AG04450 (cell line): ENCODE measurements at regions of chr3 and their contacts with region 1.

Region 1: GRCh38 chr3:48446425-48447193 is at the start of gene ATRIP:
- DNase-seq: no peak
- H3K4me3 ChIP-seq: peak within 1 kb of the TSS; percentile 95
- H3K27ac ChIP-seq: peak within 1 kb of the TSS; percentile 39
- H3K27me3 ChIP-seq: no peaks in the 10 kb centered on the region
- CTCF ChIP-seq: no peak
- polyA plus RNA-seq, gene ATRIP: 5.1 and 5.8 TPM in 2 replicates

Region 2: GRCh38 chr3:48756640-48757039 is 310.0 kb after region 1 on chr3:
- CTCF ChIA-PET with region 1: no interaction called
- POLR2A ChIA-PET with region 1: interaction called, 13 read pairs
- DNase-seq: no peak
- H3K4me3 ChIP-seq: no peak overlapping the region
- H3K27ac ChIP-seq: no peak overlapping the region
- H3K27me3 ChIP-seq: no peaks in the 10 kb centered on the region
- CTCF ChIP-seq: no peak